ENCODE measurements at regions of chr2 and their contacts with region 1.

Region 1: DNA sequence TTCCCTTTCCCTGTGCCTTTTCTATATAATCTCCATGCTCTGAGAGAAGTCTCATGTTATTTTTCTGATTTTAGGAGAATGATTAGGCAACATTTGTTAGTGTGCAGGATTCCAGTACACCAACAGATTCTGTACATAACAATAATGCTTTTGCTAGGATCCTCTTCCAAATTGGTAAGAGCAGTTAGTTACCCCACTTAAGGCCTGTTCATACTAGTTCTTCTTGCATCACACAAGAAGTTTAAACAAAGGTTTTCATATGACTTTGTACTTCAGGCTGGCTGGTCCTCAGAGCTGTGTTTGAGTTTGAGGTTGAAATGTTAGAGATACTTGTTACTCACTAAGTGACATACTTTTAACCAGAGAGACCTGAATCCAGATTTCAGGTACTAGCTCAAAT is 686.9 kb upstream of the NRXN1 start:
- DNase-seq: no peak
- H3K4me3 ChIP-seq: no peak overlapping the region
- H3K27ac ChIP-seq: no peak overlapping the region
- H3K4me1 ChIP-seq: no peaks in the 10 kb centered on the region
- H3K27me3 ChIP-seq: no peaks in the 10 kb centered on the region
- CTCF ChIP-seq: no peak
- POLR2A ChIP-seq: no peak

Region 2: DNA sequence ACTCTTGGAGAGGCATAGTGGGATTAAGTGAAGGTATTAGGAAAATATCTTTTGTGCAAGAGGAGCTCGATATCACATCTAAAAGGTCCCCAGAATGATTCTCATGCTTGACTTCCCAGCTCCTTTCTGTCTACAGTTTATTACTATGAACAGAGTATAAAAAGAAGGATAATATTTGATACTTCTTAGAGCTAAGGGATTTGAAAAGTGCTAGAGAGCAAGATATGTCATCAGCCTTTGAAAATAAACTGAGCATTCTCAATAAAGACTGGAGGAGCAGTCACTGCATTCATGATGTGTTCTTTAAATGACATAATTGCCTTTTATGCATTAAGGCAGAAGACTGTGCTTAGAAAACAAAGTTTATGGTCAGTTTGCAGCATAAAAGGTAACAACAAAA is 143.7 kb before region 1 on chr2:
- CTCF ChIA-PET with region 1: no interaction called
- POLR2A ChIA-PET with region 1: no interaction called
- dilution Hi-C with region 1: no loop called
- intact Hi-C with region 1: loop called (anchors 1 kb)
- DNase-seq: no peak
- H3K4me3 ChIP-seq: no peak overlapping the region
- H3K27ac ChIP-seq: no peak overlapping the region
- H3K4me1 ChIP-seq: no peaks in the 10 kb centered on the region
- H3K27me3 ChIP-seq: no peaks in the 10 kb centered on the region
- CTCF ChIP-seq: no peak
- POLR2A ChIP-seq: no peak

Measured in endothelial cell of umbilical vein (primary cell).